GM10248 (cell line): ENCODE measurements at regions of chr9 and their contacts with region 1.

Region 1: GRCh38 chr9:92276331-92277032 is 17.0 kb downstream of the IARS1 start:
- DNase-seq: no peak
- CTCF ChIP-seq: no peak

Region 2: GRCh38 chr9:91857291-91858212 is 418.9 kb before region 1 on chr9:
- CTCF ChIA-PET with region 1: no interaction called
- POLR2A ChIA-PET with region 1: no interaction called
- DNase-seq: no peak
- CTCF ChIP-seq: no peak

Region 3: DNA sequence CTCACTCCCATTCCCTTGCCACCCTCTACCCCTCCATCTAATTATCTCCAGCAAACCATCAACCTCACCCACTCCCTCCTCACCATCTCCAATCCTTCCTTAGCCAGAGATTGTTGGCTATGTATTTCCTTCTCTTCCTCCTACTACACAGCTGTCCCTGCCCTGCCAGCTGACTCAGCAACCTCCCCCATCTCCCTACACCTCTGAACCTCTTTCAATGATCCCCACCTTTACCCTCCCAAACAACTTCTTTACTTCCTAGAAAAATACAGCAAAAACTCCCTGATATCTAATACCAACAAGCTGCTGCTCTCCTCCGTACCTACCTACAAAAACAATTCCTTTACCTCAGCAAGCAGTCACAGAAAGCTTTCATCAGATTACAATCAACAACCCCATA is 198.6 kb before region 1 on chr9:
- CTCF ChIA-PET with region 1: no interaction called
- POLR2A ChIA-PET with region 1: no interaction called
- DNase-seq: no peak
- CTCF ChIP-seq: no peak

Region 4: GRCh38 chr9:92265159-92265558 is 11.3 kb before region 1 on chr9:
- CTCF ChIA-PET with region 1: interaction called, 16 read pairs
- POLR2A ChIA-PET with region 1: no interaction called
- DNase-seq: no peak
- CTCF ChIP-seq: no peak

Region 5: GRCh38 chr9:92292338-92293074 is 16.0 kb after region 1 on chr9:
- CTCF ChIA-PET with region 1: interaction called, 19 read pairs
- POLR2A ChIA-PET with region 1: no interaction called
- DNase-seq: no peak
- CTCF ChIP-seq: no peak

Region 6: DNA sequence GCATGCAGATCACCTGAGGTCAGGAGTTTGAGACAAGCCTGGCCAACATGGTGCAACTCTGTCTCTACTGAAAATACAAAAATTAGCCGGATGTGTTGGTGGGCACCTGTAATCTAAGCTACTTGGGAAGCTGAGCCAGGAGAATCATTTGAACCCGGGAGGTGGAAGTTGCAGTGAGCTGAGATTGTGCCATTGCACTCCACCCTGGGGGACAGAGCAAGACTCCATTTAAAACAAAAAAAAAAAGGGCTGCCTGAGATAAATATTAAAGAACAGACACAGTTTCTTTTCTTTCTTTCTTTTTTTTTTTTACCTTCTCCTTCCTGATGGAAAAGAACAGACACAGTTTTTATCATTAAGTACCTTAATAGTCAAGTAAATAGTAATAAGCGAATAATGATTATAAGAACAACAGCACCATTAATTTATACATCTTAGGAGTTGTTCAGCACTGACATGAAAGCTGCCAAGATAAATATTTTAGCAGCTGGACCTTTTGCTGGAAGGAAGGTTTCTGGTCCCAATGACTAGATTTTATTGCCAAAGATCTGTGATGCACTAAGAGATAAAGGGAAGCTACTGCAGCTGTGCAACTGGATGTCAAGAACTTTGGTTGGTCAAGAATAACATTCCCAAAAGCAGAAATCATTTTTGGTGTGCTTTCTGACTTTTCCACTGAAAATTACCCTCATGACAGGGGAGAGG is 56.2 kb after region 1 on chr9:
- CTCF ChIA-PET with region 1: no interaction called
- POLR2A ChIA-PET with region 1: no interaction called
- DNase-seq: no peak
- CTCF ChIP-seq: no peak